Transverse colon (tissue), 4 donors: ENCODE measurements at regions of chr10 and their contacts with region 1.

Region 1: GRCh38 chr10:122323941-122324675 is 50.4 kb upstream of the PLEKHA1 start:
- DNase-seq: no peak
- H3K4me3 ChIP-seq: no peak overlapping the region
- H3K27ac ChIP-seq: no peak overlapping the region
- H3K4me1 ChIP-seq: no peaks in the 10 kb centered on the region
- H3K27me3 ChIP-seq: no peaks in the 10 kb centered on the region
- CTCF ChIP-seq: no peak
- EP300 ChIP-seq: no peak
- POLR2A ChIP-seq: no peak

Region 2: DNA sequence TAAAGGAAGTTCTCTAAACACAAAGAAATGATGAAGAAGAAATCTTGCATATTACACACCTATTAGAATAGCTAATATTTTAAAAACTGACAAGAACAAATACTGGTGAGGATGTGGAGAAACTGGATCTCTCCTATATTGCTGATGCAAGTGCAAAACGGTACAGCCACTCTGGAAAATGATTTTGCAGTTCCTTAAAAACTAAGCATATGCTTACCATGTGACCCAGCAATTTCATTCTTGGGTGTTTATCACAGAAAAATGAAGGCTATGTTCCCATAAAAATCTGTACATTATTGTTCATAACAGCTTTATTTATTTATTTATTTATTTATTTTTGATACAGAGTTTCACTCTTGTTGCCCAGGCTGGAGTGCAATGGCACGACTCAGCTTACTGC is 35.5 kb after region 1 on chr10:
- in situ Hi-C with region 1: no loop called
- intact Hi-C with region 1: loop called (anchors 1 kb)
- DNase-seq: no peak
- H3K4me3 ChIP-seq: no peak overlapping the region
- H3K27ac ChIP-seq: no peak overlapping the region
- H3K4me1 ChIP-seq: no peaks in the 10 kb centered on the region
- H3K27me3 ChIP-seq: no peaks in the 10 kb centered on the region
- CTCF ChIP-seq: no peak
- EP300 ChIP-seq: no peak
- POLR2A ChIP-seq: no peak

Region 3: GRCh38 chr10:122571892-122572291 is 247.8 kb after region 1 on chr10:
- in situ Hi-C with region 1: no loop called
- intact Hi-C with region 1: no loop called
- DNase-seq: no peak
- H3K4me3 ChIP-seq: no peak overlapping the region
- H3K27ac ChIP-seq: no peak overlapping the region
- H3K4me1 ChIP-seq: no peaks in the 10 kb centered on the region
- H3K27me3 ChIP-seq: no peaks in the 10 kb centered on the region
- CTCF ChIP-seq: no peak
- EP300 ChIP-seq: no peak
- POLR2A ChIP-seq: no peak